ENCODE measurements at regions of chr3 and their contacts with region 1.

Region 1: DNA sequence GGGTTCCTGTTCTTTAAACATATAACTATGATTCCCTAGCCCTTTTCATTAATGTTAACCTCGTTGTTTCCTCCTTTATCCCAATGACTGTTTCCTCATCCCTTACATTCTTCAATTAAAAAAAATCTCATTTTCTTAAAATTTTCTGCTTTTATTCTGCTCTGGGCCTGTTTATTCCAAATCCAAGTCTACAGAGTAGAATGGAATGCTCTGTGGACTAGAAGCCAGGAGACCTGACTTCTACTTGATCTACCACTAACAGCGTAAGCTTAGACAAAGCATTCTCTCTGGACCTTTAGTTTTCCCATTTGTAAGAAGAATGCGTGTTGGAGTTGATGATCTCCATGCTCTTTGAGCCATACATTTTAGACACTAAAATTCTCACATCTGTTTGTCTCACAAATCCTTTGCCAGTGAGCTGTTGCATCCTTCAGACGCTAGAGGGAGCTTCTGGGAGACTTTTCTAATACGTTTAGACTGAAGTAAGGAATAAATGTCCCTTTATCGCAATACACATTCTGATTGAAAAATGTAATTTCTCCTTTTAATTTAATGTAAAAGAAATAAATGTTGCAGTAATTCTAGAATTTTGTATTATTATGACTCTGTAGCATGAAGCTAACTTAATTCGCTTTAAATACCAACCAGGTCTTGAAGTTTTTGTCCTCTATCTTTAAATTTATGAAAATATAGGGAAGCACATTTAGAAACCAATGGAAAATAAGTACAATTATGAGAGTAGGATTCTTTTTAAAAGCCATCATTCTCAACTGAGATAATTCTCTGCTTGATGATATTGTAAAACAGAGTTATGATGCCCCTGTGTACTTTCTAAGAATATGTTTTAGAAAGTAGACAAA is 21.7 kb upstream of the GMNC start:
- DNase-seq: peak in 1 of 2 donors; percentile 28
- H3K4me3 ChIP-seq: no peak overlapping the region
- CTCF ChIP-seq: no peak
- POLR2A ChIP-seq: no peak

Region 2: DNA sequence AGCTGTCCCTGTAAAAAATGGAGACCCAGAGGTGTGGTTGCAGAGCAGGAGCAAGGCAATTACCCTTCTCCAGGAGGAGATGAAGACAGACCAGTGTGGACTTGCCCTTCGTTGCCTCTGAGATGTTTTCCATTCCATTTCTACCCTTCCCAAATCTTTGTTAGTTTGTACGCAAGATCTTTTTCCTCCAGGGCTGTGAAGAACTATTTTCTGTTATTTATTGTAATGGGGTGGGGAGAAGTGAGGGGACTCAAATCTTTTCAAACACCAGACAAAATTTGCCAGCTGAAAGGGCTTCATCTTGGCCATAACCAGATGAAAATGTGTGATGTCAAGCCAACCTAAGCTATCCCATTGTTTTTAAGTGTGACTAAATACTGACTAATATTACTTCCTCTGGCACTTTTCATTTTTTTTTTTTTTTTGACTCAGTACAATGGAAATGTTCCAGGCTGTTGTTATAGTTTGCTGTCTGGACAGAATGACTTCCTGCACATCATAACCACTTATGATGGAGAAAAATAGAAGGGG is 1983.7 kb before region 1 on chr3:
- intact Hi-C with region 1: no loop called
- DNase-seq: no peak
- H3K4me3 ChIP-seq: no peak overlapping the region
- CTCF ChIP-seq: no peak
- POLR2A ChIP-seq: no peak

Region 3: DNA sequence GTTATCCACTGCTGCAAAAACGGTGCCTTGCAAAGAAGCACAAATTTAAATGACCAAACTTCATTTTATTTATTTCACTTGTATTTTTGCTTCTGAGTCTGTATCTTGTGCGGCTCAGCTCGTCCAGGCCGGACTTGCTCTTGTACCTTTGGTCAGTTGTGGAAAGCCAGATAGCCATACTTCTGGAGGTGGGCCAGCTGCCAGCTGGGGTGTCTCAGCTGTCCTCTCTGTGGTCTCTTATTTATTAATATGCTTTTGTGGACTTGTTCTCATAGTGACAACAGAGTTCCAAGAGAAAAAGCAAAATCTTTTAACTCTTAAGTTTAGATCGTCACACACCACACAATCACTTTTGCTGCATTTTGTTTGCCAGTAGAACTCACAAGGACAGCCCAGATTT is 282.6 kb before region 1 on chr3:
- intact Hi-C with region 1: no loop called
- DNase-seq: no peak
- H3K4me3 ChIP-seq: no peak overlapping the region
- CTCF ChIP-seq: no peak
- POLR2A ChIP-seq: no peak

Region 4: GRCh38 chr3:191051037-191051436 is 166.8 kb after region 1 on chr3:
- intact Hi-C with region 1: loop called (anchors 10 kb)
- DNase-seq: no peak
- H3K4me3 ChIP-seq: no peak overlapping the region
- CTCF ChIP-seq: no peak
- POLR2A ChIP-seq: no peak